PC-3 (cell line): ENCODE measurements at regions of chr12 and their contacts with region 1.

Region 1: GRCh38 chr12:26791301-26791791 is 41.6 kb downstream of the ITPR2 start:
- DNase-seq: no peak
- ATAC-seq: no peak
- H3K4me3 ChIP-seq: no peak overlapping the region
- H3K27ac ChIP-seq: no peak overlapping the region
- H3K4me1 ChIP-seq: peaks cover 47% of the 10 kb centered on the region
- H3K27me3 ChIP-seq: no peaks in the 10 kb centered on the region
- CTCF ChIP-seq: no peak

Region 2: DNA sequence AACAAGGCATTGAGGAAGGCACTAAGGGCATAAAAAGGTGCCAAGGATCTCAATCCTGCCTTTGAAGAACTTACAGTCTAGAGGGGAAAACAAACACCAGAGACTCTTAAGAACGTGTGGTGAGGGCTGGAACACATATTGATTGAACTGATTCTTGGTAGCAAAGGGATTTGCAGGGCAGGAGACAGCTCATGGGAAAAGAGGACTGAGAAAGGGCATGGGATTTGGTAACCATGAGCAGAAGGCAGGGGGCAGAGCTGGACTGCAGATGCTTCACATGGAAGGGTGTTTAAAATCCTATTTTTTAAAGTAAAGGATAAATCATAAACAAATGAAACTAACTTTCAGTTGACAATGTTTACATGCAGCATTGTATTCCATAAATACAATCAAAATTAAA is 161.5 kb before region 1 on chr12:
- CTCF ChIA-PET with region 1: no interaction called
- POLR2A ChIA-PET with region 1: no interaction called
- intact Hi-C with region 1: loop called (anchors 5 kb)
- DNase-seq: peak; percentile 41
- ATAC-seq: peak; percentile 28; the same call in 1 of the 2 replicates
- H3K4me3 ChIP-seq: 0 out of 2 replicates have a peak overlapping the region, but pooled peaks have one; percentile 8
- H3K27ac ChIP-seq: peak overlapping the region; percentile 46
- H3K4me1 ChIP-seq: peaks cover 55% of the 10 kb centered on the region
- H3K27me3 ChIP-seq: no peaks in the 10 kb centered on the region
- CTCF ChIP-seq: peak; percentile 79

Region 3: GRCh38 chr12:26723379-26724308 is 67.7 kb before region 1 on chr12:
- CTCF ChIA-PET with region 1: no interaction called
- POLR2A ChIA-PET with region 1: no interaction called
- intact Hi-C with region 1: loop called (anchors 2 kb)
- DNase-seq: peak; percentile 58
- ATAC-seq: peak; percentile 85
- H3K4me3 ChIP-seq: peak overlapping the region; percentile 1; the same call in 1 of the 2 replicates
- H3K27ac ChIP-seq: no peak overlapping the region
- H3K4me1 ChIP-seq: peaks cover 16% of the 10 kb centered on the region
- H3K27me3 ChIP-seq: no peaks in the 10 kb centered on the region
- CTCF ChIP-seq: no peak

Region 4: DNA sequence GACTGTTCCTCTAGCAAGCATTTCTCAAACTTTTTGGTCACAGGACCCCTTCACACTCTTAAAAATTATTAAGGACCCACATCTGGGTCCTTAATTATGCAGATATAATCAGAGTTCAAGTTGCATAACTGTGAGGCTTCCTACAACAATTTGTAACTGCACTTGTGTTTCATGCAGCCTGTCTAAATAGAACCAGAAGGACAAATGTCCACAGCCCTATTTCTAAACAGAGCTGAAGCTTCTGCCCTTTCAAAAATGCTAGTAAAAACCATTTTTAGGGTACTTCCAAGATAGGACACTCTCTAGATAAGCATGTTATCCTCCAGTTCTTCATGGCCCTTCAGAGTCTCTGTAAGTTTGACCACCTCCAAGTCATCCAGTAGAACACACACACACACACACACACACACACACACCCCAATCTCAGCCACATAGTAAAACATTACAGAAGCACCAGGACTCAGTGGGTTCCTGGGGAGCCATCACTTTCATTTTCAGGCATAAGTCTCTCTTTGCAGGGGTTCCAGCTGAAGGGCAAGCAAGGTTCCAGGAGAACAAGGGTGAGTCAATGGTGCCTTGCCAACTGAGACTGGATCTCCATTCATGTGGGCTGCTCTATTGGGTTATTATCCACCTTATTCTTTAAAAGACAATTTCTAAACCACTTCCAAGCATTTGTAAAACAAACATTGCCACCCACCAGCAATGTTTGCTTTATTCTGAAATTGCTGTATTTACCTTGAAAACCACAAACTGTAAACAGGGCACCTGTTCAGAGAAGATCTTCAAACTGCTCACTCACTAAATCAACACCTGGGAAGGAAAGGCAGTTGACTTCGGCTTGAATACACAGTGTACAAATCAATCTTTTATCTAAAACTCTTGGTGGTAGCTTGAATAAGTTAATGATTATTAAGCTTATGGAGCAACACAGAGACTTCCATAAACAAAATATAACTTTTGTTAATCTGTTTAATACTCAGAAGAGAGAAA is 22.4 kb before region 1 on chr12:
- CTCF ChIA-PET with region 1: no interaction called
- POLR2A ChIA-PET with region 1: interaction called, 3 read pairs
- intact Hi-C with region 1: loop called (anchors 2 kb)
- DNase-seq: peak; percentile 97
- ATAC-seq: peak; percentile 97
- H3K4me3 ChIP-seq: no peak overlapping the region
- H3K27ac ChIP-seq: no peak overlapping the region
- H3K4me1 ChIP-seq: peaks cover 16% of the 10 kb centered on the region
- H3K27me3 ChIP-seq: no peaks in the 10 kb centered on the region
- CTCF ChIP-seq: no peak

Region 5: DNA sequence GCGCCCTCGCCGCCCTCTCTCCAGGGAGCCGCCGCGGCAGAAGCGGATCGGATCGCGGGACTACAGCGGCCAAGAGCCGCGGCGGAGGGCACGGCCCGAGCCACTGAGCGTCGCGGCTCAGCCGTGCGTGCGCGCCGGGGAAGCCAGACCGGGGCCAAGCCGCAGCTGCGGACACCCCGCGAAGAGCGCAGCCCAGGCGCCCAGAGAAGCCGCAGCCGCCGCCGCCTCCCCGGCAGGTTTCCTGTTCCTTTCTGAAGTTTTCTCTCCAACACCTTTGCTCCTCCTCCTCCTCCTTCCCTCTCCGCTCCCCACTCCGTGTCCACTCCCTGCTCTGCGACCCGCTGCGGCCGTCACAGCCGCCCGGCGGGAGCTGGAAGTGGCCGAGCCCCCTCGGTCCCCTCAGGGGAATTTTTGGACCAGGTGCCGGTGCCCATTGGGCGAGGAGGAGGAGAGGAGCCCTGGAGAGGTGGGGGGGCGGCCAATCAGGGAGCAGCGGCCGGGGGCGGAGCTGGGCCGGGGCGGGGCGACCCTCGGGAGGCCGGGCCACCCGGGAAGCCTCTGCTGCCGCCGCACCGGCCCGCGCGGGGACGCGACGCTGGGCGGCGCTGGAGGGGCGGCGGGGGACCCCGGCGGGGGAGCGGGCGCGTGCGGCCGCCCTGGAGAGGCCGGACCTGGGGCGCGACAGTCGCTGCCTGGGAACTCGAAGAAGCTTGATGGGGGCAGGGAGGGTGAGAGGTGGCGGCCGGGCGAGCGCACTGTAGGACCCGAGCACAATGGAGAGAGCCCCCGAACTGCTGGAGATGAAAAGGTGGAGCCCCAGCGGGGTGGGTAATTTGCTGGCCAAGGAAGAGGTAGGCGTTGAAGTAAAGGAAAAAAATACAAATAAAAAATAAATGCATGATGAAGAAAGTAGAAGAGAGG is 41.7 kb after region 1 on chr12 and contains the start of gene ITPR2:
- CTCF ChIA-PET with region 1: interaction called, 5 read pairs
- POLR2A ChIA-PET with region 1: no interaction called
- intact Hi-C with region 1: loop called (anchors 2 kb)
- DNase-seq: peak; percentile 97
- ATAC-seq: peak; percentile 85
- H3K4me3 ChIP-seq: peak within 1 kb of the TSS; percentile 81
- H3K27ac ChIP-seq: peak within 1 kb of the TSS; percentile 53
- H3K4me1 ChIP-seq: peaks cover 6% of the 10 kb centered on the region; the same call in 1 of the 2 replicates
- H3K27me3 ChIP-seq: no peaks in the 10 kb centered on the region
- CTCF ChIP-seq: peak; percentile 40; the same call in 1 of the 2 replicates
- total RNA-seq, gene ITPR2: 4.0 and 10.2 TPM in 2 replicates

Region 6: DNA sequence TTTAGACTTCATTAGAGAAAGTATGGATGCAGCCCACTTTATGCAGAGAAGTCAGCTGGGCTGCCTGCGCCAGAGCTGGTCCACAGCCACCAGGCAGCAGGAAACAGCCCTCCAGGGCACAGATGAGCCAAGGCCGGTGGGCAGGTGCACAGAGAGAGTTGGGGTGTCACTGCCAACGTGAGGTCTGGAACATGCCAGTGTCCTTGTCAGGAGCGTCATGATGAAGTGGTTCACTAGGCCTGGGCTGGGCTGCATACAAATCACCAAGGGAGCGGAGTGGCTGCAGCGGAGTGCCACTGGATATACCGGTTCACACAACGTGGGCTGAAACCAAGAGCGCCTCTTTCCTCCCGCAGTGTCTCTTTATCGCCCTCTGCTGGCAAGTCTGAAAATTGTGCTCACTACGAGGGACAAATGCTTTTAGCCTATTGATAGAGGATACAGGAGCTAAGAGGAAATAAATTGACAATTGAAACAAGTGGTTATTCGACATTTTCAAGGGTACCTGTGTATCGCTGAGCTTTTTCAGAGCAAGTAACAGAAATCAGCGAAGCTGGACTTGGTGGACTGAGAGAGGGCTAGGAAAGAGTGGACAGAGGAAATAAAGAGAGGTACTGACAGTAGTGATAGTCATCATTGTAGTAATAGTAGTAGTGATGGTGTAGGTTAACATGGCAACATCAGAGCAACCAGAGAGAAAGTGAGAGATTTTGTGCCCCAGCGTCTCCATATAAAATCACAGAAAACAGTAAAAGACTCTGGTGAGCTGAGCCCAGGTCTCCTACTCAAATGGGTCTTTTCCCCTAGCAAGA is 93.6 kb after region 1 on chr12:
- CTCF ChIA-PET with region 1: no interaction called
- POLR2A ChIA-PET with region 1: no interaction called
- intact Hi-C with region 1: loop called (anchors 5 kb)
- DNase-seq: peak; percentile 99
- ATAC-seq: peak; percentile 96
- H3K4me3 ChIP-seq: peak overlapping the region; percentile 42; the same call in 1 of the 2 replicates
- H3K27ac ChIP-seq: no peak overlapping the region
- H3K4me1 ChIP-seq: peaks cover 3% of the 10 kb centered on the region; the same call in 1 of the 2 replicates
- H3K27me3 ChIP-seq: no peaks in the 10 kb centered on the region
- CTCF ChIP-seq: peak; percentile 99